Activated B cell treated with CpG ODN at 0.5 μM for 24 hours (primary cell): ENCODE measurements at regions of chr3 and their contacts with region 1.

Region 1: DNA sequence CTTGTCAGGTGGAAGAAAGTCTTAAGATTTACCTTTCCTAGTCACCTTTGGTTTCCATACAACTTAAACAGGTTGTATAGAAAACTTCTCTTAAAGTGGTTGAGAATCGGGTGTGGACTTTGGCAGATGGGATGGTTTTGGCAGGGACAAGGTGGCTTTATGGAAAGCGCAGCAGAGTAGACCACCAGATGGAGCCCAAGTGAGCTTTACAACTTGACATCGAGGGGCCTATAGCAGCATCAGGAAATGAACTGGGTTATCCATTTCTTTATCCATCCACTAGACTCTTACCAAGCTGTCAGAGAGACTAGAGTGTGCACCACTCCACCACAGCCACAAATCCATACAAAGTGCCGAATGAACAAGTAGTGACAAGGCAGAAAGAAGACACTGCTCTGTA is 85.3 kb upstream of the MBNL1 start:
- DNase-seq: peak; percentile 20
- ATAC-seq: peak; percentile 87
- H3K4me3 Mint-ChIP-seq: peak overlapping the region; percentile 5
- H3K27ac Mint-ChIP-seq: no peak overlapping the region
- H3K4me1 Mint-ChIP-seq: peaks cover 30% of the 10 kb centered on the region
- H3K27me3 Mint-ChIP-seq: no peaks in the 10 kb centered on the region
- CTCF ChIP-seq: no peak

Region 2: GRCh38 chr3:152019477-152019876 is 164.0 kb before region 1 on chr3:
- CTCF ChIA-PET with region 1: no interaction called
- POLR2A ChIA-PET with region 1: no interaction called
- intact Hi-C with region 1: no loop called
- DNase-seq: no peak
- ATAC-seq: no peak
- H3K4me3 Mint-ChIP-seq: no peak overlapping the region
- H3K27ac Mint-ChIP-seq: no peak overlapping the region
- H3K4me1 Mint-ChIP-seq: no peaks in the 10 kb centered on the region
- H3K27me3 Mint-ChIP-seq: peaks cover 2% of the 10 kb centered on the region
- CTCF ChIP-seq: no peak

Region 3: DNA sequence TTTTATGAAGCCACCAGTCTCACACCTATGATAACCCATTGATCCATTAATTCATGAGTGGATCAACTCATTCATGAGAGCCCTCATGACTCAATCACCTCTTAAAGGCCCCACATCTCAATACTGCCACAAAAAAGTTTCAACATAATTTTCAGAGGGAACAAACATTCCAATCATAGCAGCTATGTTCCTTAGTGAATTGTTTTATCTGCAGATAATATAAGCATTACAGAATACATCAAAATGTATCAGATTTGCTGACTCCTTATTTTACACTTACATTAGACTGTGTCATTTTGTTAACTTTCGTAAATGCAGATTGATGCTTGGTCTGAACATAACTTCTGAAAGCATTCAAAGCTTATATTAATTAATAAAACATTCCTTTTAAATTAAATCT is 70.1 kb before region 1 on chr3:
- CTCF ChIA-PET with region 1: no interaction called
- POLR2A ChIA-PET with region 1: no interaction called
- intact Hi-C with region 1: no loop called
- DNase-seq: no peak
- ATAC-seq: no peak
- H3K4me3 Mint-ChIP-seq: no peak overlapping the region
- H3K27ac Mint-ChIP-seq: no peak overlapping the region
- H3K4me1 Mint-ChIP-seq: no peaks in the 10 kb centered on the region
- H3K27me3 Mint-ChIP-seq: no peaks in the 10 kb centered on the region
- CTCF ChIP-seq: no peak

Region 4: DNA sequence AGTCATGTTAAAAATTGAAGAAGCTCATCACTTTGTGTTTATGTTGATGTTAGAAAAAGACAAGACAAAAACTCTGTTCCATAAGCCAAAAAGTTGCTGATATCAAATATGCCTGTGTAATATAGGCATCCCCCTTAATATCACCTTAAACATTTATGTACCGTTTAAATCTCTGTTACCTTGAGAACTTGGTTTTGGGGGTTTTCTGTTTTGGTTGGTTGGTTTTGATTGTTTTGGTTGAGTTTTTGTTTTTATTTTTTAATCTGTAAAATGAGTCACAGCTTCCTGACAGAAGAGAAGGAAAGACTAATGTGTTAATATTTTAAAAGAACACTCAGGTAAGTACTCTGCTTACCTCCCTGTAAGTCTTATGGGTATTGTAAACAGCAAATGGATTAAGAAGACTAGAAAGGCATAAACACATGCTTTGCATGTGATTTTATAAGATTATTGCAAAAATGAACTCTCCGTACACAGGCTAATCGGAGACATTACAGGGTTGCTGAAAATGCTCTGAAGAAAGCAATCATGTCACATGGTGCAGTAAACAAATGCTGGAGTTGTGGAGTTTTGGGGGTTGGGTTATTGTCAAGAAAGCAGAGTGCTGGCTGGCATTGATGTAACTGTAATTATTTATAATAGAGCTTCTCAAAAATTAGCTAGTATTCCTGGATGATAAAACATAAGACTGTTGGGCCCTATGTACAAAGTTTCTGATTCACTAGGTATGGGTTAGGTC is 15.8 kb after region 1 on chr3:
- CTCF ChIA-PET with region 1: interaction called, 19 read pairs
- POLR2A ChIA-PET with region 1: interaction called, 20 read pairs
- intact Hi-C with region 1: no loop called
- DNase-seq: no peak
- ATAC-seq: peak; percentile 10
- H3K4me3 Mint-ChIP-seq: peak overlapping the region; percentile 73
- H3K27ac Mint-ChIP-seq: peak overlapping the region; percentile 97
- H3K4me1 Mint-ChIP-seq: peaks cover 87% of the 10 kb centered on the region
- H3K27me3 Mint-ChIP-seq: no peaks in the 10 kb centered on the region
- CTCF ChIP-seq: no peak

Region 5: GRCh38 chr3:152241142-152242017 is 57.9 kb after region 1 on chr3:
- CTCF ChIA-PET with region 1: interaction called, 24 read pairs
- POLR2A ChIA-PET with region 1: interaction called, 7 read pairs
- intact Hi-C with region 1: no loop called
- DNase-seq: no peak
- ATAC-seq: no peak
- H3K4me3 Mint-ChIP-seq: peak overlapping the region; percentile 62
- H3K27ac Mint-ChIP-seq: peak overlapping the region; percentile 90
- H3K4me1 Mint-ChIP-seq: peaks cover 77% of the 10 kb centered on the region
- H3K27me3 Mint-ChIP-seq: no peaks in the 10 kb centered on the region
- CTCF ChIP-seq: no peak

Region 6: GRCh38 chr3:152309535-152310307 is 126.2 kb after region 1 on chr3:
- CTCF ChIA-PET with region 1: interaction called, 6 read pairs
- POLR2A ChIA-PET with region 1: interaction called, 3 read pairs
- intact Hi-C with region 1: loop called (anchors 2 kb)
- DNase-seq: no peak
- ATAC-seq: peak; percentile 30
- H3K4me3 Mint-ChIP-seq: no peak overlapping the region
- H3K27ac Mint-ChIP-seq: no peak overlapping the region
- H3K4me1 Mint-ChIP-seq: peaks cover 61% of the 10 kb centered on the region
- H3K27me3 Mint-ChIP-seq: no peaks in the 10 kb centered on the region
- CTCF ChIP-seq: no peak

Region 7: GRCh38 chr3:152444029-152444641 is 260.7 kb after region 1 on chr3:
- CTCF ChIA-PET with region 1: interaction called, 89 read pairs
- POLR2A ChIA-PET with region 1: interaction called, 13 read pairs
- intact Hi-C with region 1: loop called (anchors 1 kb)
- DNase-seq: no peak
- ATAC-seq: peak; percentile 37
- H3K4me3 Mint-ChIP-seq: no peak overlapping the region
- H3K27ac Mint-ChIP-seq: no peak overlapping the region
- H3K4me1 Mint-ChIP-seq: peaks cover 57% of the 10 kb centered on the region
- H3K27me3 Mint-ChIP-seq: no peaks in the 10 kb centered on the region
- CTCF ChIP-seq: no peak

Region 8: GRCh38 chr3:152574461-152575079 is 391.1 kb after region 1 on chr3:
- CTCF ChIA-PET with region 1: interaction called, 3 read pairs
- POLR2A ChIA-PET with region 1: interaction called, 3 read pairs
- intact Hi-C with region 1: loop called (anchors 1 kb)
- DNase-seq: no peak
- ATAC-seq: peak; percentile 52
- H3K4me3 Mint-ChIP-seq: no peak overlapping the region
- H3K27ac Mint-ChIP-seq: no peak overlapping the region
- H3K4me1 Mint-ChIP-seq: no peaks in the 10 kb centered on the region
- H3K27me3 Mint-ChIP-seq: no peaks in the 10 kb centered on the region
- CTCF ChIP-seq: no peak